H1 (cell line): ENCODE measurements at regions of chr15 and their contacts with region 1.

Region 1: DNA sequence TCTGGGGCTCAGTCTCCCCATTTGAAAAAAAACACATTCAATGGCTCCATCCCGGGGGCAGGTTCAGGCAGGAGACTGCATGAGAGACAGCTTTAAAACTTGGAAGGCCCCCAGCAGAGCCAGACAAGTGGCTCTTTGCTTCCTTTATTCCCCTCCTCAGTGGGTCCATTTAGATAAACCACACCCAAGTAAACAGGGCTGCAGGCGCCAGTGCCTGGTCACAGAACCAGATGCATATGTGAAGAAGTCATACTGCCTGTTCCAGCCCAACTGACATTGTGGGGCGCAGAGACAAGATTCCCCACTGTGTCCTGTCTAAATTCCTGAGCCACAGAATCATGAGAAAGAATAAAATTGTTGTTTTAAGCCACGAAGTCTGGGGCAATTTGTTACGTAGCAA is 9.0 kb downstream of the FBN1 start:
- DNase-seq: no peak
- H3K4me3 ChIP-seq: no peak overlapping the region
- H3K27ac ChIP-seq: no peak overlapping the region
- H3K4me1 ChIP-seq: peaks cover 0 to 1% (median 0%) of the 10 kb centered on the region in 4 experiments; a peak in 3 of 7 replicates
- H3K27me3 ChIP-seq: no peaks in the 10 kb centered on the region
- CTCF ChIP-seq: no peak
- EP300 ChIP-seq: no peak
- POLR2A ChIP-seq: no peak
- RAD21 ChIP-seq: no peak

Region 2: DNA sequence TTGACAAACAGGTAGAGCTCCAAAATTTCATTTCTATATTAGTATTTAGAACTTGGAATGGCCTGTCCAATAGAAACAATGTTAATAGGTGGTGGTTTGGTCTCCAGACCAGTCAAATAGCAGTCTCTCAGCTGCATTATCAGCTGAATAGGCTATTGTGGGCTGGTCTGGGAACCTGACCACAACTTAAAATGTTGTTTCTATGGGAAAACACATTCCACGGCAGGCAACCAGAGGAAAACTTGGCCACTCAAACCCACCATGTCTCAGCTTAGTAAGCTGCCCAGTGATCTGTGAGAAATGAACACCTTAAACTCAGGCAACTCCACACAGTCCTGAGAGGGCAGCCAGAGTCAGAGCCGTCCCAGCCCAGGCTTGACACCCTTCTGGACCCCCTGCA is 11.4 kb before region 1 on chr15:
- CTCF ChIA-PET with region 1: interaction called, 11 read pairs
- POLR2A ChIA-PET with region 1: no interaction called
- DNase-seq: no peak
- H3K4me3 ChIP-seq: no peak overlapping the region
- H3K27ac ChIP-seq: no peak overlapping the region
- H3K4me1 ChIP-seq: peaks cover 0 to 4% (median 2%) of the 10 kb centered on the region in 4 experiments; a peak in 1 of 7 replicates
- H3K27me3 ChIP-seq: no peaks in the 10 kb centered on the region
- CTCF ChIP-seq: no peak
- EP300 ChIP-seq: no peak
- POLR2A ChIP-seq: no peak
- RAD21 ChIP-seq: no peak